Heart right ventricle (tissue), 16 donors: ENCODE measurements at regions of chr10 and their contacts with region 1.

Region 1: DNA sequence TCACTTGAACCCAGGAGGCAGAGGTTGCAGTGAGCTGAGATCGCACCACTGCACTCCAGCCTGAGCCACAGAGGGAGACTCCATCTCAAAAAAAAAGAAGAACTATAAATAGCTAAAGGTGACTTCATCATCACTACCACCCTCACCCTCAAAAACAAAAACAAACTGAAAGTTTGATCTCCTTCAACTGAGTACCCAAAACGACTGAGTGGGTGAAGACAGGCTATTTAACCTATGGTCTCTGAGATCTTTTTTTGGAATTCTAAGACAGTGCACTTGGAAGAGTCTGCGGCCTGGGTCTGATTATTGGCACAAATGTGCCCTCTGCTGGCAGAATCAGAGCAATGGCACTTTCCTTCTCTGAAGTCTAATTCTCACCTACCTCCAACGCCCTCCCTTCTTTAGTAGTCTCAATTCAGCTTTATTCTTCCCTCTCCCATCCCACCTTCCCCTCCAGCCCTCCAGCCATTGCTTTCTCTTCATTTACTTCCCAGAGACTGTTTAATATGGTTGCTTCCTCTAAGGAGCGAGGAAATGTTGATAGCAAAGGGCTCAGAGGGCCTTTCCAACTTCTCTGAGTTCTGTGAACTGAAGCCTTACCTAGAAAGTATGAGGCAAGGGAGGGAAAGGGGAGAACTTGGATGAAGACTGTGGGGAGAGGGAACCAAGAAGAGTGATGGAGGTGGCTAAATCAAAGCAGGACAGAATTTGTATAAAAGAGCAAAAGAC is 2.9 kb upstream of the MYOZ1 start:
- DNase-seq: no peak
- ATAC-seq: peak in 7 of 8 donors; percentile 2 to 46 (median 34)
- H3K4me3 ChIP-seq: no peak overlapping the region
- H3K27ac ChIP-seq: peak overlapping the region in 7 of 10 donors; percentile 10 to 97 (median 50)
- H3K4me1 ChIP-seq: peaks cover 10 to 50% (median 28%) of the 10 kb centered on the region in 9 donors
- H3K27me3 ChIP-seq: no peaks in the 10 kb centered on the region
- CTCF ChIP-seq: peak; percentile 73 to 93 (median 87)

Region 2: DNA sequence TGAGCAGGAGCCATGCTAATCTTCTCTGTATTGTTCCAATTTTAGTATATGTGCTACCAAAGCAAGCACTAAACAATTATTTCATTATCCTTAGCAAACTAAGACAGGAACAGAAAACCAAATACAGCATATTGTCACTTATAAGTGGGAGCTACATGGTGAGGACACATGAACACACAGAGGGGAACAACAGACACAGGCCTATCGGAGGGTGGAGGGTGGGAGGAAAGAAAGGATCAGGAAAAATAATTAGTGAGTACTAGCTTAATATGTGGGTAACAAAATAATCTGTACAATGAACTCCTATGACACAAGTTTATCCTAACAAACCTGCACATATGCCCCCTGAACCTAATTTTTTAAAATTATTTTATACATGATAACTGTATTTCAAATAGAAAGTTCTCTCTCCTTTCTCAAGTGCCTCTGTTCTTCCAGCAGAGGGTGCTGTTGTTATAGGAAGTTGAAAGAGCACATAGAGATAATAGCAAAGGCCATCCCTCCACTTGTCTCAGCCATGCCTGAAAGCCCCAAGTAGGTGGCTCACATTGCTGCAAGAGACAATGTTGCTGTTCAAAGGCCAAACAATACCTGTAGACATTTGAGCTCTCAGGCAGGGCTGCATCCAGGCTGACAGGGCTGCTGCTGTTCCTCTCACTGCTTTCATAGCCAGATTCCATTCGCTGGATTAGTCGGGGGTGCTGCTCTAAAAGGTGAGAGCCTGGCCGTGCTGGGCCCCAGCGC is 114.9 kb before region 1 on chr10:
- intact Hi-C with region 1: loop called (anchors 1 to 5 kb)
- DNase-seq: peak in 1 of 2 donors; percentile 70
- ATAC-seq: peak; percentile 38 to 93 (median 86)
- H3K4me3 ChIP-seq: no peak overlapping the region
- H3K27ac ChIP-seq: no peak overlapping the region
- H3K4me1 ChIP-seq: no peaks in the 10 kb centered on the region
- H3K27me3 ChIP-seq: no peaks in the 10 kb centered on the region
- CTCF ChIP-seq: peak; percentile 61 to 96 (median 87)

Region 3: GRCh38 chr10:73534857-73535256 is 109.3 kb before region 1 on chr10:
- intact Hi-C with region 1: loop called in 3 of 10 experiments (anchors 1 to 5 kb)
- DNase-seq: no peak
- ATAC-seq: no peak
- H3K4me3 ChIP-seq: no peak overlapping the region
- H3K27ac ChIP-seq: no peak overlapping the region
- H3K4me1 ChIP-seq: no peaks in the 10 kb centered on the region
- H3K27me3 ChIP-seq: no peaks in the 10 kb centered on the region
- CTCF ChIP-seq: no peak

Region 4: DNA sequence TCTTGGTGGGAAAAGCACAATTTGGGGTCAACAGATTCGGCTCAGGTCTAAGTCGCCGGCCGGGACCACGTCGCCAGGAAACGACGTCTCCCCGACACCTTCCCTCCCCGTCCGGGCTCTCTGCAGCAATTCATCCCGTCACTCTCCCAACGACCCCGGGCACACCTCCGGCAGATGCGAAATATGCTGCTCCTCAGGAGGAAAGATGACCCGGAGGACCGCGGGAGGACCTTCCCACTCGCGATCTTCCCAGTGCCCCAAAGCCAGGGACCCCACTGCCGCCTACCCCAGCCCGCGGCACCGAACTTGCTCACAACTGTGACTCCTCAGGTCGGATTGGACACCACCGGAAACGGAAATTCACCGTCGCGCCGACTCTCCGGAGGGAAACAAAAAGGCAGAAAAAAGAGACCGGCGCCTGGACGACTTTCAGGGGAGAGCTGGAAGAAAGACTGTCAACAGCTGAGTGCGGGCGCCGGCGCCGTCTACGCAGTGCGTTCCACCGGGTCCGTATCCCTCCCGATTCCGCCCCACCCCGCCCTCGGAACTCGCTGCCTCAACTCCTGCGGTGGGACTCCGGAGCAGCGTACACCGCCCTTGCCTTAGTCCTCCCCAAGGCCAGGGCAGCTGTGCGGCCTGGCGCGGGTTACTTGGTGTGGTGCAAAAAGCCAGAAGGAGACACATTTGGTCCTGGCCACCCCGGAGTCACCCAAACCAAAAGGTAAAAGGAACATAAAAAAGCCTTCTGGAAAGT is 86.2 kb after region 1 on chr10:
- intact Hi-C with region 1: loop called in 2 of 10 experiments (anchors 5 kb)
- DNase-seq: peak; percentile 86 to 88
- ATAC-seq: peak; percentile 89 to 97 (median 94)
- H3K4me3 ChIP-seq: peak overlapping the region; percentile 62 to 97 (median 82)
- H3K27ac ChIP-seq: peak overlapping the region; percentile 63 to 96 (median 92)
- H3K4me1 ChIP-seq: peaks cover 7 to 58% (median 28%) of the 10 kb centered on the region in 9 donors
- H3K27me3 ChIP-seq: no peaks in the 10 kb centered on the region
- CTCF ChIP-seq: no peak